Right ventricle myocardium inferior (tissue), 1 donor: ENCODE measurements at regions of chr1 and their contacts with region 1.

Region 1: DNA sequence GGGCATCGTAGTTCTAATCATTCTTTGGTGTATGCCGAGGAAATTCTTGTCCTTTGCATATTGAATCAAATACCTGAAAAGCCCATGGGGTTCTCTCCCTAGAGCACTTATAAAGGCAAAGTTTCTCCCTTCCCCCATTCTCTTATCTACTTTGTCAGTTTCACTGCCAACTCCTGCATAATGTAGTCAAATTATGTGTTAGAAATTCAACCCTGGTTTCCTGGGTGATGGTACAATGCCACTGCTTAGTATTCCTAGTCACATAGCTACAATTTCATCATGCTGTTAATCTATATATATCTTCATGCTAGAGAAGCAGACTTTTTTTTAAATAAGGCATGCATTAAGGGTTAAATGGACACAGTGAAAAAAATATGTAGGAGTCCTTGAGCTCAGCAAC is 119.0 kb downstream of the PDE4B start:
- DNase-seq: no peak
- ATAC-seq: no peak

Region 2: GRCh38 chr1:66000033-66000637 is 88.5 kb after region 1 on chr1:
- intact Hi-C with region 1: loop called (anchors 10 kb)
- DNase-seq: no peak
- ATAC-seq: no peak

Region 3: DNA sequence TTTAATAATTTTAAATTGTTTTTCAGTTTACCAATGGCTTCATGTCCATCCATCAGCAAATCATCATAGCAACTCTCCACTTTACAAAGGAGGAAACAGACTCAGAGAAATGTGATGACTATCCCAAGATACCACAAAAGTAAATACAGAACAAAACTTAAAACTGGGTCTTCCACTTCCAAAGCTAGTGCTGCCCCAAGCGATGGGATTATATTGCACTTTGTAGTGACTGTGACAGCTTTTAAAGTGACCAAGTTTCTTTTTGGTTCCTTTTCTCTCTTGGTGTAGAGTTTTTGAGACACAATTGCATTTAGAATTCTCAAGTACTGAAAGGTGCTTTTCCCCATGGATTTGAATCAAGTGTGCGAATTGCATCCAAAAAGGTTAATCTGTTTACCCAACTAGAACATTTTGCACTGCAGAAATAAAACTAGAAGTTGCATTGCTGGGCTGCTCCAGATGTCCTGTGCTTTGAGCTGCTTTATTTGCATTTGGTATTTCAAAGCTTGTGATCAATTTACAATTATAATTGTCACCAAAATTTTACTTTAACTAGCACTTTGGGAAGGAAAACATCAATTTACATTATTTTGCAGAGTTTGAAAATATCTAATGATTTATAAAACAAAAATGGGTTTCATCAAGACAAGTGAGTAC is 201.2 kb after region 1 on chr1:
- intact Hi-C with region 1: no loop called
- DNase-seq: no peak
- ATAC-seq: no peak